Caco-2 (cell line): ENCODE measurements at regions of chr20 and their contacts with region 1.

Region 1: DNA sequence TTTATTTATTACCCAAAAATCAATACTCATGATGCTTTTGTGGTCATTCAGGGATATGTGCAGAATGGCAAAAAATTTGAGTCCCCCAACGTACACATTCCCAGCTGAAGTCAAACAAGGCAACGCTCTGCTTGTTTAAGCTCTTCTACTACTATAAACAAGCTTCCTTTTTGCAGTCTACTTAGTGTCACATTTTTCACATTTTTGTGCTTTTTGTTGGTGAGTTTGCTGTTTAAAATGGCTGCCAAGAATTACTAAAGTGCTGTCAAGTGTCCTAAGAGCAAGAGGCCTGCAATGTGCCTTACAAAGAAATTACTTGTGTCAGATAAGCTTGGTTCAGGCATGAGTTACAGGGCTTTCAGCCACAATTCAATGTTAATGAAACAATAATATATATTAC is 2.1 kb downstream of the WFDC8 start:
- DNase-seq: peak; percentile 62 to 66
- H3K4me3 ChIP-seq: no peak overlapping the region
- H3K4me3 Mint-ChIP-seq: peak overlapping the region; percentile 15
- H3K27ac Mint-ChIP-seq: peak overlapping the region; percentile 63
- H3K4me1 ChIP-seq: peaks cover 27% of the 10 kb centered on the region
- H3K4me1 Mint-ChIP-seq: peaks cover 29% of the 10 kb centered on the region
- H3K27me3 ChIP-seq: no peaks in the 10 kb centered on the region
- H3K27me3 Mint-ChIP-seq: no peaks in the 10 kb centered on the region
- CTCF ChIP-seq: no peak

Region 2: GRCh38 chr20:45470262-45470931 is 106.6 kb before region 1 on chr20:
- CTCF ChIA-PET with region 1: no interaction called
- POLR2A ChIA-PET with region 1: no interaction called
- intact Hi-C with region 1: no loop called
- DNase-seq: peak; percentile 61 to 65
- H3K4me3 ChIP-seq: peak overlapping the region; percentile 44
- H3K4me3 Mint-ChIP-seq: peak overlapping the region; percentile 77
- H3K27ac Mint-ChIP-seq: no peak overlapping the region
- H3K4me1 ChIP-seq: peaks cover 18% of the 10 kb centered on the region; the same call in 1 of the 2 replicates
- H3K4me1 Mint-ChIP-seq: peaks cover 8% of the 10 kb centered on the region
- H3K27me3 ChIP-seq: peaks cover 9% of the 10 kb centered on the region
- H3K27me3 Mint-ChIP-seq: peaks cover 15% of the 10 kb centered on the region
- CTCF ChIP-seq: no peak

Region 3: DNA sequence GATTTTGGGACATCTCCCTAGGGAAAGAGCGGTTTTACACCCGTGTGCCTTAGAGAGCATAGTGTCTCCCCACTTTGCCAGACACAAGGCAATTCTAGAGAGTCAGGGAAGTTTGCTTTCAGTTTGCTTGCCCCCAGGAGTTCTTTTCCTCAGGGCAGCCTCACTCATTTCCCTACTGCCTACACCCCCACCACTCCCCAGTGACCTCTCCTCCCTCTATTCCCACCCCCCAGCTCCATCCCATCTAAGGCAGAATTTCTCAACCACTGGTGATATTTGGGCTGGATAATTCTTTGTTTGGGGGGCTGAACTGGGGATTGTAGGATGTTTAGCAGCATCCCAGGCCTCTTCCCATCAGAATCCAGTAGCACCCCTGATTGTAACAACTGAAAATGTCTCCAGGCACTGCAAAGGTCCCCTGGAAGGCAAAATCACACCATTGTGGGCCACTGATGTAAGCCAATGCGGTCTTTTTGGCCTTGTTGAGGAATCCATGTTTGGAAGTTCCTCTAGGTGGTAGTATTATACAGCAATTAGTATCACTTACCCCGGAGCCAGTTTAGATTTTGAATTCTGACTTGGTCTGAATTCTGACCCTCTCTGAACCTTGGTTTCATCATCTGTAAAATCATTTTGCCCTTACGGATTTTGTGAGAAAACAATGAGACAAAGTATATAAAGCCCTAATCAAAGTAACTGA is 31.1 kb before region 1 on chr20:
- CTCF ChIA-PET with region 1: interaction called, 14 read pairs
- POLR2A ChIA-PET with region 1: no interaction called
- intact Hi-C with region 1: loop called (anchors 2 kb)
- DNase-seq: peak in 1 of 2 experiments; percentile 69
- H3K4me3 ChIP-seq: no peak overlapping the region
- H3K4me3 Mint-ChIP-seq: no peak overlapping the region
- H3K27ac Mint-ChIP-seq: no peak overlapping the region
- H3K4me1 ChIP-seq: no peaks in the 10 kb centered on the region
- H3K4me1 Mint-ChIP-seq: no peaks in the 10 kb centered on the region
- H3K27me3 ChIP-seq: peaks cover 3% of the 10 kb centered on the region; the same call in 1 of the 2 replicates
- H3K27me3 Mint-ChIP-seq: peaks cover 35% of the 10 kb centered on the region
- CTCF ChIP-seq: peak; percentile 66 to 88

Region 4: DNA sequence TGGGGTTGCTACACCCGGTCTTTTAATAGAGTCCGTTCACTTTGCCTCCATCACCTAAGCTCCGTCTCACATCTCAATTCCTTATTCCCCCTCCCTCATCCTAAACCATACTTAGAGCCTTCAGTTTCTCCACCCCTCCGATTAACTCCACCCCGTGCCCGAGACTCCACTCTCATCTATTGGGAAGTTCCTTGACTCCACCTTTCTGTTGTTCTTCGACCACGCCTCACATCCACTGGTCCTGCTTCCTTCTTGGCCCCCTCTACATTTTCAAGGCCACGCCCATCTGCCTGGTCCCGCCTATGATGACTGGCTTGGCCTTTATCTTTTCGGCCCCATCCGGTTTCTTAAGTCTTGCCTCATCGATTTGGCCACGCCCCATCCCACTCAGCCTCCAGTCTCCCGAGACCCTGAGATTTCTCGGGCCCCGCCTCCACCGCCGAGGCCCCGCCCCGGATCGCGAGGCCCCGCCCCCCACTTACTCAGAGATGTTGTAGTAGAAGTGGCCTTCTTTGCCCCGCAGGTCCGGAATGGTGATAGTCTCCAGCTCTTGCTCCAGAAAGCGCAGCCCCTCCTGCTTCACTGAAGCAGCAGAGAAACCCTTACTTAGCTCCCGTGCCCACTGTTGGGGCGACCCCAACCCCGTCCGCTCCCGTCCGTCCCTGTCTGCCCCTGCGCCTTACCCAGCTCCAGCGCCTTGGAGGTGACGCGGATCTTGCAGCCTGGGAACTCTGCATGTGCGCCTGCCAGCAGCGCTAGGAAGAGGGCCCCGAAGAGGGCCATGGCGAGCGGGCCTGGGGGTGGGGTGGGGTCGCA is 333.9 kb after region 1 on chr20:
- CTCF ChIA-PET with region 1: no interaction called
- POLR2A ChIA-PET with region 1: no interaction called
- intact Hi-C with region 1: no loop called
- DNase-seq: peak; percentile 74 to 93
- H3K4me3 ChIP-seq: no peak overlapping the region
- H3K4me3 Mint-ChIP-seq: peak overlapping the region; percentile 72
- H3K27ac Mint-ChIP-seq: no peak overlapping the region
- H3K4me1 ChIP-seq: peaks cover 12% of the 10 kb centered on the region
- H3K4me1 Mint-ChIP-seq: peaks cover 9% of the 10 kb centered on the region
- H3K27me3 ChIP-seq: no peaks in the 10 kb centered on the region
- H3K27me3 Mint-ChIP-seq: no peaks in the 10 kb centered on the region
- CTCF ChIP-seq: no peak